ENCODE measurements at regions of chr7 and their contacts with region 1.

Region 1: GRCh38 chr7:94395141-94396036 is 694 bp downstream of the COL1A2 start:
- DNase-seq: peak; percentile 81
- H3K4me3 Mint-ChIP-seq: no peak overlapping the region
- H3K27ac Mint-ChIP-seq: no peak overlapping the region
- H3K4me1 Mint-ChIP-seq: no peaks in the 10 kb centered on the region
- H3K27me3 Mint-ChIP-seq: no peaks in the 10 kb centered on the region
- CTCF ChIP-seq: peak; percentile 65

Region 2: DNA sequence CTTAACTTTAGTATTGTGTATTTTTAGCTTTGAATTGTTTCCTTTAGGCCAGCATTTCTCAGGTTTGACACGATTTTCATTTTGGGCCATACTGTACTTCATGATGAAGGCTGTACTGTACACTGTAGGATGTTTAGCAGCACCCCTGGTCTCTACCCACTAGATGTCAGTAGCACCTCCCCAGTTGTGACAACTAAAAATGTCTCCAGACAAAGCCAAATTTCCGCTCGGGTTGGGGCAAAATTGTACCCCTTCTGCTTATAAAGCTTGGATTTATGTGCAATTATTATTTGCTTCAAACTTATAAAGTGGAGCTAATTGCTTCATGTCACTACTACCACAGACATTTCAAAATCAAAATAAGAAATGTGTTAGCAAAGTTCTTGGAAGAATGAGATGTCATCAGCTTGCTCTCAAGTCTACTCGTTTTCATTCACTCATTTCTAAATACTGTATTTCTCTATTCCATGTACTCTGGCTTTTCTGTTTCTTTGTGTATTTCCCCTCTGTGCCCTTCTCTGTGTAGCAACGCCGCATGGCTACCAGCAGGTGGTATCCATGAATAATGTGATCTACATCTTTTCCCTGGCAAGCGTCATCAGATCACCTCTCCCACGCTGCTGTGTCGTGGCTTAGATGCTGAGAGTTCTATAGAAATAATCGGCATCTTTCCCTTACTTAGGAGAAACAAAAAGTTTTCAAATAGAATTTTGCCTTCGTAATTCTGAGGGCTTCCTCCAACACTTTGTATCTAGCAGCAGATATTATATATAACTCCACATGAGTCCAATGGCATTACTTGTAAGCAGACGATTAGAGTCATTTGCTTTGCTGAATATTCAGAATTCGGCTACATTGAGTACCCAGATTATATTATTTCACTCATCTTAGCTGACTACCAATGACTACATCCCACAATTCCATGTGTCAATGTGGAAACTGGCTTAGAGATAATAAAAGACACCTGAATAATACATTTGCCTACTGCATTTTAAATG is 773.1 kb before region 1 on chr7:
- CTCF ChIA-PET with region 1: interaction called, 4 read pairs
- POLR2A ChIA-PET with region 1: no interaction called
- intact Hi-C with region 1: loop called (anchors 1 kb)
- DNase-seq: peak; percentile 41
- H3K4me3 Mint-ChIP-seq: no peak overlapping the region
- H3K27ac Mint-ChIP-seq: no peak overlapping the region
- H3K4me1 Mint-ChIP-seq: peaks cover 6% of the 10 kb centered on the region
- H3K27me3 Mint-ChIP-seq: peaks cover 91% of the 10 kb centered on the region
- CTCF ChIP-seq: peak; percentile 41

Region 3: GRCh38 chr7:93799750-93800357 is 595.5 kb before region 1 on chr7:
- CTCF ChIA-PET with region 1: interaction called, 15 read pairs
- POLR2A ChIA-PET with region 1: no interaction called
- intact Hi-C with region 1: loop called (anchors 1 kb)
- DNase-seq: peak; percentile 34
- H3K4me3 Mint-ChIP-seq: no peak overlapping the region
- H3K27ac Mint-ChIP-seq: no peak overlapping the region
- H3K4me1 Mint-ChIP-seq: peaks cover 6% of the 10 kb centered on the region
- H3K27me3 Mint-ChIP-seq: no peaks in the 10 kb centered on the region
- CTCF ChIP-seq: peak; percentile 56

Region 4: DNA sequence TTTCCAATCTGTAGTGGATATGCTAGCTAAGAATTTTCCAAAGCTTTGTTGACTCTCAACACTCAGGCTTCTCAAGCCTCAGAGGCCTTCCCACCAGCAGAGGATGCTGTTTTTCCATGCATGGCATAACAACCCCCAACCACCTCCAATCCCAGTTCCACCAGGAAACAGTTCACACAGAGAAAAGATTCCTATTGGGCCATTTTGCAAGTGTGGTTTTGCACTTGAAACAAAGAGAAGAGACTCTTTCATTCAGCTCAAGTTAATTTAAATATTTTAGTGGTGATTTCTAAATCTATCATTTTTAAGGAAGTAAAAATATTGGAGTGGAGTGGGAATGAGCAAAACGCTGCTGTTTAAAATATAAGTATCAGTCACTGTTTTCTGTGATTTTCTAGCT is 106.3 kb before region 1 on chr7:
- CTCF ChIA-PET with region 1: interaction called, 128 read pairs
- POLR2A ChIA-PET with region 1: interaction called, 7 read pairs
- intact Hi-C with region 1: loop called (anchors 1 kb)
- DNase-seq: peak; percentile 81
- H3K4me3 Mint-ChIP-seq: no peak overlapping the region
- H3K27ac Mint-ChIP-seq: no peak overlapping the region
- H3K4me1 Mint-ChIP-seq: no peaks in the 10 kb centered on the region
- H3K27me3 Mint-ChIP-seq: no peaks in the 10 kb centered on the region
- CTCF ChIP-seq: peak; percentile 74

Region 5: DNA sequence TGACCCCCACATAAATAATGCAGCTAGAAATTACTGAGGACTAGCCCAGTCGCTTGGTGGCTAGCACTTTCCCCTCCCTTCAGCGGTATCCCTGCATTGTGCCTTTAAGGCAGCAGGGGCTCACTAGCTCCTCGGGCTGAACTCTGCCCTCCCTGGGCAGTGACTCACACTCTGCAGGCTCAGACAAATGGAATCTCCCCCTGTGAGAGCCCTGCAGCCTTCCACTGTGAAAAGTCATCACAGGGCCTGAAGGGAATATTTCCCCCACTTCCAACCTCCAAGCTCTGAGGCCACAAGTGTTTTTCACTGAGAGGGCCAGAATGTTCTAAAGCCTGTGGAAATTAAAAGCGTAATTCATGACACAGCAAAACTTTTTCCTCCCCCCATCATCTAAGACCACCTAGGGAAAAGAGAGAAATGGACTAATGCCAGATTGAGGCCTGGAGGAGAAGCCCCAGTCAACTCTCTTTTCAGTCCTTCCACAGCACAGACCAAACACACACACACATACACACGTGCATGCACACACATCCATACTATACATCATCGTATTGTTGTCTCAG is 94.3 kb before region 1 on chr7:
- CTCF ChIA-PET with region 1: interaction called, 128 read pairs
- POLR2A ChIA-PET with region 1: interaction called, 11 read pairs
- intact Hi-C with region 1: no loop called
- DNase-seq: peak; percentile 92
- H3K4me3 Mint-ChIP-seq: peak overlapping the region; percentile 27
- H3K27ac Mint-ChIP-seq: peak overlapping the region; percentile 86
- H3K4me1 Mint-ChIP-seq: peaks cover 39% of the 10 kb centered on the region
- H3K27me3 Mint-ChIP-seq: no peaks in the 10 kb centered on the region
- CTCF ChIP-seq: no peak

Region 6: DNA sequence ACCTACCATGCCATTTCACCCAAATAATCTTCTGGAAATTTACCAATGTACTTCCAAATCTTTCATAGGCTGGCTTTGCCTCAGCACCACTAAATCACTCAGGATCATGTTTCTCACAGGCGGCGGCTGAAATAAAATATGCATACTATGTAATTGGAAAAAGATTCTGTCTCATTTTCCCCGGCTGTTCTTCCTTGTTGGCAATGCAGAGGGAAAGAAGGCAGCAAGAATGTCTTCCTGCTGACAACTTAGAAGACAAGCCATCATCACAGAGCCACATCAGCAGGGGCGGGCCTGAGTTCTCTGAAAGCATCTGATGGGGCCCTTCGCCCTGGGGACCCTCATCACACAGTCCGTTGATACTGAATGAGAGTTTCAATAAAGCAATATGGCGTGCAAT is 39.9 kb before region 1 on chr7:
- CTCF ChIA-PET with region 1: no interaction called
- POLR2A ChIA-PET with region 1: no interaction called
- intact Hi-C with region 1: no loop called
- DNase-seq: no peak
- H3K4me3 Mint-ChIP-seq: no peak overlapping the region
- H3K27ac Mint-ChIP-seq: no peak overlapping the region
- H3K4me1 Mint-ChIP-seq: no peaks in the 10 kb centered on the region
- H3K27me3 Mint-ChIP-seq: no peaks in the 10 kb centered on the region
- CTCF ChIP-seq: no peak

Region 7: DNA sequence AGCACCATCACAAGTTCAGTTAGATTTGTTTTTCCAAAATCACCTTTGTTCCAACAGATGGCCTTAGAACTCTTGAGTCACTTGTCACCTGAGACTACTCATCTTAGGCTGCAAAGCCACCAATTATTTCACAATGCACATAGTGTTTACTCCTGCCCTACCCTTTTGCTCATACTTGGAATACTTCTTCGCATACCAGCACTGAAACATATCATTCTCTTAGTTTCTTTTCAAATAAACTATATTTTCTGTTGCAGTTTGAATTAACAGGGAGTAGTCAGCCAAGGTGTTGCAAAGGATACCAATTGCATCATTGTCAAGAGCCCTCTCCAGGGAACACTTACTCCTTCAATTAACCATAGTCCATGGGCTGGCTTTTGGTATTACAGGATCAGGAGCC is 185.2 kb after region 1 on chr7:
- CTCF ChIA-PET with region 1: no interaction called
- POLR2A ChIA-PET with region 1: no interaction called
- intact Hi-C with region 1: no loop called
- DNase-seq: peak; percentile 27
- H3K4me3 Mint-ChIP-seq: no peak overlapping the region
- H3K27ac Mint-ChIP-seq: peak overlapping the region; percentile 21
- H3K4me1 Mint-ChIP-seq: peaks cover 46% of the 10 kb centered on the region
- H3K27me3 Mint-ChIP-seq: no peaks in the 10 kb centered on the region
- CTCF ChIP-seq: no peak